ENCODE measurements at regions of chr3 and their contacts with region 1.

Region 1: DNA sequence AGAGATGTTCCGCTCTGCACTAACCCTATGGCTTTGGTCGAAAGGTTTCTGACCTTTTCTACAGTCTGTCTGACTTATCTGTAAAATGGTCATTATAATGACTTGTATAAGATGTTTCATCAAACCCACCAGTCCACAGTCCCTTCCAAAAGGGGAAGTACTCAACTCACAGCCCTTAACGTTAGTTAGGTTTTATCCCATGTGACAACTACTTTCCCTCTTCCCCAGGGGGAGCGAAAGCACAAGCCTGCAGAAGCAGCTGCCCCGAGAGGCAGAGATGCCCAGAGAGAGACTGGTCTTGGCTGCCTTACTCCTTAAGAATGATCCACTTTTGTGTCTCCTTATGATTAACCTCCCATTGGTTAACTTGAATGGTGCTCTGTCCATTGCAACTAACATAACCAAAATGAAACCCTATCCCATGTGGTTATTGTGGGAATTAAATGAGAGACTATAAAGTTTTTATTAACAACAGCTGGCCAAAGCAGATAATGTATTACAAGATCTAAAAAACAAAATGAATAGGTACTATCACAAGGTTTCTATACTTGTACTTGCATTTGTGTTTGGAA is 6.4 kb downstream of the ASTE1 start:
- DNase-seq: no peak
- CTCF ChIP-seq: no peak

Region 2: DNA sequence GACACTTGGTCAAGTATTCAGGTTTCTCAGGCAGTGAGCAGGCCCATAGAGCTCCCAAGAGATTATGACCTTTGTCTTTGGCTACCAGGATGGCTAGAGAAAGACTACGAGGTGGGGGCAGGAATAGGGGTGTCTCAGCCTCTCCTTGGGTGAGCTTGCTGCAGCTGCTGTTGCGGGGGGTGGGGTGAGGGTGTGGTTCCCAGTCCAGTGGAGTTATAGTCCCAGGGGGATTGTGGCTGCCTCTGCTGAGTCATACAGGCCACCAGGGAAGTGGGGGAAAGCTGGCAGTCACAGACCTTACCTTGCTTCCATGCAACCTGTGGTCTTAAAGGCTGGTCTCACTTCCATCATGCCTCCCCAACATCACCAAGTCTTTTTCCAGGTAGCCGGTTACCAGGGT is 94.6 kb before region 1 on chr3:
- CTCF ChIA-PET with region 1: no interaction called
- POLR2A ChIA-PET with region 1: no interaction called
- DNase-seq: no peak
- CTCF ChIP-seq: no peak

Region 3: DNA sequence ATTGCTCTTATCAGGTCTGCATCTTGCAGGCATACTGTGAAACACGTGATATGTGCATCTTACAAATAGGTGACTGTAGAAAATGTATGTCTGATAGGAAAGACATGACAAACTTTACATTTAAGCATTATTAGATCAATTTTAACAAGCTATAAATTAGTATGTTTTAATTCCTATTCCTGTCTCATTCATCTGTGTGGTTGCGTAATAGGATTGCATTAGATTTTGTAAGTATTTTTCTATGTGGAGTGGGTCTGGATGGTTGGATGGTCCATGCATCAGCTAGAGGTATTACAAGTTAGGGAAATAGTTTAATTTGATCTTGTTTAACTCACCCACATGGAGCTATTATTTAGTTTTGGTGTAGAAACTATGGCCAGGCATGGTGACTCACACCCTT is 12.4 kb before region 1 on chr3:
- CTCF ChIA-PET with region 1: interaction called, 12 read pairs
- POLR2A ChIA-PET with region 1: no interaction called
- DNase-seq: no peak
- CTCF ChIP-seq: no peak

Region 4: DNA sequence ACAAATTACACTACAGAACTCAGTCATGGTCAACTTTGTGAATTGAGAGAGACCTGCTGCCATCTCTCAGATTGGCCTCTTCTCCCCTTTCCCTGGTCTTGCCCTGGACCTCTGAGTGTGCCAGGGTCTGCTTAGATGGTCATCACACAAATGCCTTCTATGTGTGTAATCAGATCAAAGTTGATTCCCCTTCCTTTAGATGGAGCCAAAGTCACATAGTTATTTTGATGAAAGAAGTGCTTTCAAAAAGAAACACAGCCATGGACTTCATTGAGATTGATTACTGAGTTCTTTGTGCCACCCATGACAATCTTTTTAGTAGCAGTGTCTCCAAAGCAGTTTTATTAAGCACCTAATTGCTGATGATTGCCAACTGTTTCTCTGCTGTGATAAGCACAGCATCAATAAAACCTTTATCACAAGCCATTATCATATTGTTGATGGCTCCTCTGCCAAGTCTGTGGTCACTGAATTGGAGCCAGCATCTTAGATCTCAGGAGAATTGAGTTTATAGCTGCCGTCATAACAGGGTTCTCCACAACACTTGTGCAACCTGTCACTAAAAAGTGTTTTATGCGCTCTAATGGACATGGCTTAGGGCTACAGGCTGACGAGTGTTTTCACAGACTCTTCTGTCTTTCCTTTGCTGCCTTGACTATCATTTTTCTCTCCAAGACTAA is 211.6 kb after region 1 on chr3:
- CTCF ChIA-PET with region 1: no interaction called
- POLR2A ChIA-PET with region 1: no interaction called
- DNase-seq: no peak
- CTCF ChIP-seq: no peak

Measured in GM10248 (cell line).